MCF 10A (cell line): ENCODE measurements at regions of chr10 and their contacts with region 1.

Region 1: DNA sequence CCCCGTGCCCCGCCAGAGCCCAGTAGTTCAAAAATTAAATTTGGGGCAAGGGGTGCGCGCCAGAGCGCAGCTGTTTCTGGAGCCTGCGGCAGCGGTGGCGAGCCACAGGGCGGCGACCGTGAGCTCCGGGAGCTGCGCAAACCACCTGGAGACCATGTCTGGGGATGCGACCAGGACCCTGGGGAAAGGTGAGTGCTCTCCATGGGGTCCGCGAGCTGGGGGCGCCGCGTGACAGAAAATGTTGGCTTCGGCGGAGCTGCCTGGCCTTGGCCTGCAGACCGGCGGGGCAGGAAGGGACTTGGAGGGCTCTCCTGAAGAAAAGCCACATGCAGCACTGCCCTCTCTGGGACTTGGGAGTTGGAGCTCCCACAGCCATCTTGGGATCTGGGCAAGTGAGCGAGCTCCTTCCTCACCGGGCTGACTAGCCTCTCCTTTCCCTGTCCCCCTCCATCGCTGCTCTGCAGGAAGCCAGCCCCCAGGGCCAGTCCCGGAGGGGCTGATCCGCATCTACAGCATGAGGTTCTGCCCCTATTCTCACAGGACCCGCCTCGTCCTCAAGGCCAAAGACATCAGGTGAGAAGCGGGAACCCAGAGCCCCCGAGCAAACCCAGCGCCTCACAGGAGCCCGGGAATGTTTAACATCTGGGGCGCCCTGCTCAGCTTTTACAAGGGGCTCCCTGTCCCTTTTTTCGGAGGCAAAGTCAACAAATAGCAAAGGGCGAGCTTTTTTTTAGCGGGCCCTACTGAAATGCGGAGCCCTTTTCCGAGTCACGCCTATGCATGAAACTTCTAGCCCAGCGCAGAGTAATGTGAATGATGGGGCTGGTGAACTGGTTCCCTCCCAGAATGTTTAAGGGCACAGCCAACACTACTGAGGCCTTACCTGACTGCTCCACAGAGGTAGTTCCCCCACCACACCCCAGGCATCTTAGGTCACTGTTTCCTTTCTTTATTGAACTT is 6.1 kb downstream of the GSTO2 start:
- DNase-seq: peak; percentile 73
- H3K4me3 Mint-ChIP-seq: peak overlapping the region; percentile 89
- H3K27ac Mint-ChIP-seq: peak overlapping the region; percentile 73
- H3K4me1 Mint-ChIP-seq: peaks cover 7% of the 10 kb centered on the region
- H3K27me3 Mint-ChIP-seq: no peaks in the 10 kb centered on the region
- CTCF ChIP-seq: peak; percentile 94

Region 2: GRCh38 chr10:103781329-103782061 is 493.5 kb before region 1 on chr10:
- CTCF ChIA-PET with region 1: no interaction called
- POLR2A ChIA-PET with region 1: no interaction called
- intact Hi-C with region 1: no loop called
- DNase-seq: peak; percentile 66
- H3K4me3 Mint-ChIP-seq: peak overlapping the region; percentile 23
- H3K27ac Mint-ChIP-seq: peak overlapping the region; percentile 74
- H3K4me1 Mint-ChIP-seq: peaks cover 47% of the 10 kb centered on the region
- H3K27me3 Mint-ChIP-seq: no peaks in the 10 kb centered on the region
- CTCF ChIP-seq: peak; percentile 12

Region 3: DNA sequence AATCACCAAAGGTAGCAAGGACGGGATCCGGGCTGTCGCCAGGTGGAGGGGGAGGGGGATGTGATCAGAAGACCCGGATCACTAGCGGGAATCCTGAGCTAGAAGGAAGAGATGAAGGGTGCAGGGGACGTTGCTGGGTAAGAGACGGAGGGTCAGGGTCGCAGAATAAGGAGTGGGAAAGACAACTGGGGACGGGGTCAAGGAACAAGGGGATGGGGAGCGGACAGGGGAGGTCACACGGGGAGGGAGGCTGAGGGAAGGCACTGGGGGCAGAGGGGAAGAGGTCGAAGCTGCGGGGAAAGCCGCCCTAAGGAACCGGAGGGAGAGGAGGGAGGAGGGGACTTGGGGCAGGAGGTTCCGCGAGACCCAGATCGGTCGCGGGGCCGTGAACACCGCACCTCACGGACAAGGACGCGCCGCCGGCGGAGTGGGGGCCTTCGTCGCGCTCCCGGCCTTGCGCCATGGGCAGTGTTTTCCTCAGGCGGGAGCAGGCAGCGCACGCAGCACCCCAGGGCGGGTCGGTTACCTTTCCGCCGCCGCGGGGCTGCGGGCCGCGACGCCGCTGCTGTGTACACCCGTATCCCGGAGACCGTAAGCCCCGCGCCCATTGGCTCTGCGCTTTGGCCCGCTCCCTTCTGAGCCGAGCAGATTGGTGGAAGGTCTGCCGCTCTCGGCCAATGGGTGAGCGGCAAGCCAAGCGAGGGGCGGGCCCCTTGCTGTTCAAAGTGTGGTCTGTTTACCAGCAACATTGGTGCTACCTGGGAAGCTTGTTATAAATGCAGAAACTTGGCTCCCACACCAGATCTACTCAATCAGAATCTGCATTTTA is 43.0 kb before region 1 on chr10 and contains the start of gene CFAP43:
- CTCF ChIA-PET with region 1: interaction called, 10 read pairs
- POLR2A ChIA-PET with region 1: interaction called, 9 read pairs
- intact Hi-C with region 1: no loop called
- DNase-seq: peak; percentile 97
- H3K4me3 Mint-ChIP-seq: peak within 1 kb of the TSS; percentile 81
- H3K27ac Mint-ChIP-seq: peak within 1 kb of the TSS; percentile 93
- H3K4me1 Mint-ChIP-seq: peaks cover 11% of the 10 kb centered on the region
- H3K27me3 Mint-ChIP-seq: peaks cover 27% of the 10 kb centered on the region
- CTCF ChIP-seq: no peak
- total RNA-seq, gene CFAP43: 0.25 and 0.42 TPM in 2 replicates

Region 4: GRCh38 chr10:104260775-104261115 is 14.3 kb before region 1 on chr10:
- CTCF ChIA-PET with region 1: interaction called, 139 read pairs
- POLR2A ChIA-PET with region 1: interaction called, 56 read pairs
- intact Hi-C with region 1: no loop called
- DNase-seq: peak; percentile 49
- H3K4me3 Mint-ChIP-seq: no peak overlapping the region
- H3K27ac Mint-ChIP-seq: peak overlapping the region; percentile 89
- H3K4me1 Mint-ChIP-seq: peaks cover 29% of the 10 kb centered on the region
- H3K27me3 Mint-ChIP-seq: no peaks in the 10 kb centered on the region
- CTCF ChIP-seq: no peak

Region 5: GRCh38 chr10:104317195-104317767 is 42.2 kb after region 1 on chr10:
- CTCF ChIA-PET with region 1: interaction called, 17 read pairs
- POLR2A ChIA-PET with region 1: interaction called, 13 read pairs
- intact Hi-C with region 1: no loop called
- DNase-seq: no peak
- H3K4me3 Mint-ChIP-seq: peak overlapping the region; percentile 19
- H3K27ac Mint-ChIP-seq: peak overlapping the region; percentile 93
- H3K4me1 Mint-ChIP-seq: peaks cover 47% of the 10 kb centered on the region
- H3K27me3 Mint-ChIP-seq: no peaks in the 10 kb centered on the region
- CTCF ChIP-seq: no peak

Region 6: DNA sequence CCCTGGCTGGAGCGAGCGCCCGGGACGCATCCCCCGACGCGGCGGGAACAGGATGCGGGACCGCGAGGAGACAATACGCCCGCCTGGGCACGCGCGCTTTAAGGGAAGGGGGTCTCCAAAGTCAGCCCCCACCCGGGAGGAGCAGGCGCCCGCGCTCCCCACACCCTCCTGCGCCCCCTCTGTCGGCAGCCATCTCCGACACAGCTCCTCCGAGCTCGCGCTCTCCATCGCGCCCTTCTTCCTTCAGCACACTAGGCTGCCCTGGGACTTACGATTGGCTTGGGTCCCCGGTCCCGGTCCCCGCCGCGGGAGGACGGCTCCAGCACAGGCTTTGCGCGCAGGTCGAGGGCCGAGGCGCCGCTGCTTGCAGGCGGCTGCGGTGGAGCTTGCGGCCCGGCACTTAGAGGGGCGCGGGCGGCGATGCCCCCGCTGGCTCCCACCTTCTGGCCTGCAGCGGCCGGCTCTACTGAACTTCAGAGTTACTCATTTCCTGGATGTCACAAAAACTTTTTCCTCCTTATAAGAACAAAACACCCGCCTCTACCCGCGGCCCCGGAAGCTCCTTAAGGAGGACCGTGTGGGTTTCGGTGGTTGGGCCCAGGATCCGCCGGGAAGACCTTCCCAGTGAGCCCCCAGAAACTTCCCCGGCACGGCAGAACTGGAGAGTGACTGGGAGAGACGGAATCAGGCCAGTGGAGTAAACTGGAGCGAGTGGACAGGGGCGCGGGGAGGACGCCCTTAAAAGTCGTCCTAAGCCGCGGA is 63.1 kb after region 1 on chr10 and contains the start of gene ITPRIP:
- CTCF ChIA-PET with region 1: interaction called, 46 read pairs
- POLR2A ChIA-PET with region 1: interaction called, 55 read pairs
- intact Hi-C with region 1: no loop called
- DNase-seq: peak; percentile 81
- H3K4me3 Mint-ChIP-seq: peak within 1 kb of the TSS; percentile 80
- H3K27ac Mint-ChIP-seq: peak within 1 kb of the TSS; percentile 97
- H3K4me1 Mint-ChIP-seq: peaks cover 39% of the 10 kb centered on the region
- H3K27me3 Mint-ChIP-seq: no peaks in the 10 kb centered on the region
- CTCF ChIP-seq: no peak
- total RNA-seq, gene ITPRIP: 29.4 and 29.8 TPM in 2 replicates